Thyroid gland (tissue), 4 donors: ENCODE measurements at regions of chr11 and their contacts with region 1.

Region 1: GRCh38 chr11:33863418-33864172 is 28.3 kb downstream of the LMO2 start:
- DNase-seq: no peak
- H3K4me3 ChIP-seq: no peak overlapping the region
- H3K27ac ChIP-seq: no peak overlapping the region
- H3K4me1 ChIP-seq: peaks cover 1 to 10% of the 10 kb centered on the region in 2 donors
- H3K27me3 ChIP-seq: no peaks in the 10 kb centered on the region
- CTCF ChIP-seq: no peak
- POLR2A ChIP-seq: no peak

Region 2: DNA sequence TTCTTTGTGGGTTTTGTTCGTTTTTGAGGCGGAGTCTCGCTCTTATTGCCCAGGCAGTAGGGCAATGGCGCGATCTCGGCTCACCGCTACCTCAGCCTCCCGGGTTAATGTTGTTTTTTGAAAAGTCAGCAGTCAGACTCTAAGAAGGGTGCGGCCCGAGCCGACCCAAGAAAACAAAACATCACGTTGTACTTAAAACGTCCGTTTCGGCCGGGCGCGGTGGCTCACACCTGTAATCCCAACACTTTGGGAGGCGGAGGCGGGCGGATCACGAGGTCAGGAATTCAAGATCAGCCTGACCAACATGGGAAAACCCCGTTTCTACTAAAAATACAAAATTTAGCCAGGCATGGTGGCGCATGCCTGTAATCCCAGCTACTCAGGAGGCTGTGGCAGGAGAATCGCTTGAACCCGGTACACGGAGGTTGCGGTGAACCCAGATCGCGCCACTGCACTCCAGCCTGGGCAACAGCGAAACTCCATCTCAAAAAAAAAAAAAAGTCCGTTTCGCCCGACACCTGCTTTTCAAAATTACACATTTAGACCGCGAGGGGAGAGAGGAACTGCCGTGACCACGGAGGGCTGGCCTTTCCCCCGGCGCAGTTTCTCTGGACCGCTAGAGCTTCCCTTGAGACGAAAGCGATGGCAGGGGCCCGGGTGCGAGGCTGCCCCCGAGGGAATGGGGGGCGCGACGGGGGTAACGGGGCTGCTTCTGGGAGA is 128.0 kb before region 1 on chr11:
- intact Hi-C with region 1: no loop called
- DNase-seq: peak; percentile 72 to 76
- H3K4me3 ChIP-seq: peak overlapping the region; percentile 51 to 89 (median 66)
- H3K27ac ChIP-seq: peak overlapping the region; percentile 91 to 97 (median 97)
- H3K4me1 ChIP-seq: peaks cover 22 to 29% of the 10 kb centered on the region in 2 donors
- H3K27me3 ChIP-seq: no peaks in the 10 kb centered on the region
- CTCF ChIP-seq: peak in 3 of 6 experiments; percentile 15 to 40 (median 20)
- POLR2A ChIP-seq: peak in 1 of 2 donors; percentile 46

Region 3: DNA sequence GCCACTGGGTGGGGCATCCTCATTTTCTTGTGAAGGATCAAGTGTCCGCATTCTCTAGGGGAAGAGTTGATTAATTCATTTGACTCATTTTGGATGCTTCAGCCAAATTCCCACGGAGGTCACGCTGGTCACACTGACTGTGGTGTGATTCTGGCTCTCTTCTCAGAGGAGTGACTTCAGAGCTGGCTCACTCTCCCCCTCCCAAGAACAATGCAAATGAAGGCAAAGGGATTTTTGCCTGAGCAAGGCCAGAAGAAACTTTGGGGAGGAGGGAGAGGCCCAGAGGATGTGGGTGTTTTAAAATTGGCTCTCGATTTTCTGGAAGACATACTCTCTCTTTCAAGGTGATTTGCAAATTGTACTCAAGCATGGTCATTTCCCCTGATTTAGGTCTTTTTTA is 79.4 kb after region 1 on chr11:
- intact Hi-C with region 1: no loop called
- DNase-seq: peak in 1 of 2 donors; percentile 11
- H3K4me3 ChIP-seq: no peak overlapping the region
- H3K27ac ChIP-seq: no peak overlapping the region
- H3K4me1 ChIP-seq: peaks cover 0 to 23% of the 10 kb centered on the region in 2 donors
- H3K27me3 ChIP-seq: no peaks in the 10 kb centered on the region
- CTCF ChIP-seq: no peak
- POLR2A ChIP-seq: no peak

Region 4: GRCh38 chr11:33965032-33965431 is 101.4 kb after region 1 on chr11:
- intact Hi-C with region 1: loop called (anchors 5 kb)
- DNase-seq: no peak
- H3K4me3 ChIP-seq: no peak overlapping the region
- H3K27ac ChIP-seq: no peak overlapping the region
- H3K4me1 ChIP-seq: no peaks in the 10 kb centered on the region
- H3K27me3 ChIP-seq: no peaks in the 10 kb centered on the region
- CTCF ChIP-seq: no peak
- POLR2A ChIP-seq: no peak